ENCODE measurements at regions of chr11 and their contacts with region 1.

Region 1: GRCh38 chr11:4187055-4187988 is 92.7 kb downstream of the RRM1 start:
- DNase-seq: no peak
- H3K4me3 ChIP-seq: peak overlapping the region; percentile 50 to 60 (median 59)
- H3K27ac ChIP-seq: no peak overlapping the region
- H3K4me1 ChIP-seq: no peaks in the 10 kb centered on the region
- H3K27me3 ChIP-seq: no peaks in the 10 kb centered on the region
- CTCF ChIP-seq: peak; percentile 63 to 94 (median 89)

Region 2: DNA sequence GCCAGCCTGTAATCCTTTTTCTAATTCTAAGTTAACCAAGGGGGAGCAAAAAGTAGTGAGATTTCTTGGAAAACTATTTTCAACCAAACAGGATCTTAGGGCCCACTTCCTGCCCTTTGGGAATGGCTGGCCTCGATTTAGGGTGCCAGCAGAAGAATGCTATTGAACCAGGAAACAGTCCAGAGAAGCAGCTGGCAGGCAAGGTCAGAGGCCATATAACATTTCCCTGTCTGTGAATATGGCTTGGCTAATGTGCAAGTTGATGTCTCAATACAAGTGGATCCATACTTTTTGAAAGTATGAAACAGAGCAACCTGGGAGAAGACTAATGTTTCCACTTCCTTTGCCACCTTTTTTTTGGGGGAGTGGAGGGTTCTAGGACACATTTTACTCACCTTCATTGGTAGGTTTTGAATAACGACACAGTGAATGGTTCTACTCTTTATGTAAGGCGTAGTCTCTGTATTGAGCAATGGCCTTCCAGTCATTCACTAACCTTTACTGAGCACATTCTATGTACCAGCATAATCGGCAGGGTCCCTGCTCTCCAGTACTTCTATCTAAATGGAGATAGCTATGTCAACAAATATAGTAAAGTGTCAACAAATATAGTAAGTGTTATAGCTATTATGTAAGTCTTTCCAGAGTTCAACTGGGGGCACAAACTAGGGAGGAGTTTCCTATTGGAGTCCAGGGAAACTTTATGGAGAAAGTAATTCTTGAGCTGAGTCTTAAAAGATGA is 127.0 kb before region 1 on chr11:
- dilution Hi-C with region 1: no loop called
- DNase-seq: no peak
- H3K4me3 ChIP-seq: no peak overlapping the region
- H3K27ac ChIP-seq: no peak overlapping the region
- H3K4me1 ChIP-seq: peaks cover 25% of the 10 kb centered on the region
- H3K27me3 ChIP-seq: no peaks in the 10 kb centered on the region
- CTCF ChIP-seq: no peak

Region 3: GRCh38 chr11:4551346-4551979 is 364.1 kb after region 1 on chr11:
- dilution Hi-C with region 1: loop called (anchors 25 kb)
- DNase-seq: no peak
- H3K4me3 ChIP-seq: no peak overlapping the region
- H3K27ac ChIP-seq: no peak overlapping the region
- H3K4me1 ChIP-seq: no peaks in the 10 kb centered on the region
- H3K27me3 ChIP-seq: no peaks in the 10 kb centered on the region
- CTCF ChIP-seq: peak; percentile 32 to 47 (median 38)